HepG2 (cell line): ENCODE measurements at regions of chr7 and their contacts with region 1.

Region 1: GRCh38 chr7:95246831-95247370 is 77.4 kb downstream of the PON1 start:
- DNase-seq: peak; percentile 54
- ATAC-seq: peak; percentile 80
- H3K4me3 ChIP-seq: no peak overlapping the region
- H3K27ac ChIP-seq: no peak overlapping the region
- H3K4me1 ChIP-seq: no peaks in the 10 kb centered on the region
- H3K27me3 ChIP-seq: no peaks in the 10 kb centered on the region
- CTCF ChIP-seq: peak; percentile 74
- EP300 ChIP-seq: no peak
- POLR2A ChIP-seq: no peak
- RAD21 ChIP-seq: no peak

Region 2: GRCh38 chr7:94436018-94436604 is 810.8 kb before region 1 on chr7:
- CTCF ChIA-PET with region 1: no interaction called
- POLR2A ChIA-PET with region 1: no interaction called
- in situ Hi-C with region 1: loop called (anchors 25 kb)
- intact Hi-C with region 1: no loop called
- DNase-seq: peak; percentile 71
- ATAC-seq: peak; percentile 85
- H3K4me3 ChIP-seq: no peak overlapping the region
- H3K27ac ChIP-seq: no peak overlapping the region
- H3K4me1 ChIP-seq: peaks cover 53% of the 10 kb centered on the region
- H3K27me3 ChIP-seq: no peaks in the 10 kb centered on the region; a peak in 1 of 5 replicates
- CTCF ChIP-seq: peak; percentile 78
- EP300 ChIP-seq: no peak
- POLR2A ChIP-seq: no peak
- RAD21 ChIP-seq: peak; percentile 19; the same call in 1 of the 2 replicates

Region 3: DNA sequence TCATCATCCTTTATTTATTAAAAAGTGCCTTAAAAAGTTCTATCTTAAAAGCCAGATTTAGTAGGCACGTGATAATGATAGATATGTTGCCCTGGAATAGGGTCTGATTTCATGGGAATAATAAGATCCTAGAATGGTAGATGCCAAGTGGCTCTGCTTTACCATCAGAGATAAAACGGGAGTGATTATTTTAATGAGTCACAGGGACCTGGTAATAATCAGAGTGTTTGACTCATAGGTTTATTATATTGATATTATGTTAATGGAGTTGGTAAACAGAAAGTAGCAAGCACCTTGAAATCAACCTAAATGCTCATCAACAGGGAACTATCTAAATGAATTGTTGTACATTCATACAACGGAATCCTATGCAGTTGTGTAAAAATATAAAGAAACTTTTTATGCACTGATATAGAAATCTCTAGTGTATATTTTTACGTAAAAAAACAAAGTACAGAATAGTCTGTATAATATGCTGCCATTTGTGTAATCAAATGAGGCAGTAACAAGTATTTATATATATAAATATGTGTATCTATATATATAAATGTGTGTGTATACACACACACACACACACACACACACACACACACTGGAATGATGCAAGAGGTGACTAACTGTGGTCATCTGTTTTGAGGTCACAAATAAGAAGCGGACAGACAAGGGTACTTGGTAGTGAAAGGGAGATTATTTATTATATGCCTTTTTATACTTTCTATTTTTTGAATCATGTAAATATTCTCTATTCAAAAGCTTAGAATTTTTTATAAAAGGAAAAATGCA is 446.8 kb after region 1 on chr7:
- CTCF ChIA-PET with region 1: no interaction called
- POLR2A ChIA-PET with region 1: no interaction called
- in situ Hi-C with region 1: no loop called
- intact Hi-C with region 1: no loop called
- DNase-seq: no peak
- ATAC-seq: no peak
- H3K4me3 ChIP-seq: no peak overlapping the region
- H3K27ac ChIP-seq: no peak overlapping the region
- H3K4me1 ChIP-seq: no peaks in the 10 kb centered on the region
- H3K27me3 ChIP-seq: no peaks in the 10 kb centered on the region
- CTCF ChIP-seq: no peak
- EP300 ChIP-seq: no peak
- POLR2A ChIP-seq: no peak
- RAD21 ChIP-seq: no peak